ENCODE measurements at regions of chr17 and their contacts with region 1.

Region 1: GRCh38 chr17:31580316-31581021 is 189.0 kb downstream of the RAB11FIP4 start:
- DNase-seq: peak; percentile 74
- H3K4me3 Mint-ChIP-seq: peak overlapping the region; percentile 52
- H3K27ac Mint-ChIP-seq: peak overlapping the region; percentile 70
- H3K4me1 Mint-ChIP-seq: peaks cover 53% of the 10 kb centered on the region
- H3K27me3 Mint-ChIP-seq: no peaks in the 10 kb centered on the region
- CTCF ChIP-seq: no peak

Region 2: DNA sequence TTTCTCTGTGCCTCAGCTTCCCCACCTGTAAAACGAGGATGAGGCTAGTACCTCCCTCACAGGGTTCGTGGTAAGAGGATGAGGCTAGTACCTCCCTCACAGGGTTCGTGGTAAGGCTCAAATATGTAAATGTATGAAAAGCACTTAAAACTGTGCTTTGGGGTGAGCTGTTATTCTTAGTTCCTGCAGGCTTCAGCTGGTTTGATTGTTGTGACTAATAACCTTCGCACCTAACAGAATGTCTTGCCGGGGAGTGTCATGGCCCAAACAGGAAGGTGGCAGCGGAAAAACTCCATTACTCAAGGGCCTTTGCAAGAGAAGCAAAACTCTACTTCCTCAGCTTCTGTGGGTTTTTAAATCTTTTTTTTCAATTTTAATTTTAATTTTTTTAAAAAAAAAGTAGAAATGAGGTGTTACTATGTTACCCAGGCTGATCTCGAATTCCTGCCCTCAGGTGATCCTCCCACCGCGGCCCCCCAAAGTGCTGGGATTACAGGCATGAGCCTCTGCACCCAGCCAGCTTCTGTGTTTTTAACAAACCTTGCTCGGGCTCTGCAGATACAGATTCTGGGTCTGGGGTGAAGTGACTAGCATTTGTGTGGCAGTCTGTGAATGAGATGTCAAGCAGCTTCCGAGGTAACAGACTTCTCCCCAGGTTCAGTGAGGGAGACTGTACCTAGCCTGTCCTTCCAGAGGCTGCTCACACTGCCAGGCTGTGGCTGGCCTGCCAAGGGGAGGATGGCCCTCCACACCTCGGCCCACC is 86.0 kb before region 1 on chr17:
- CTCF ChIA-PET with region 1: no interaction called
- intact Hi-C with region 1: no loop called
- DNase-seq: no peak
- H3K4me3 Mint-ChIP-seq: no peak overlapping the region
- H3K27ac Mint-ChIP-seq: peak overlapping the region; percentile 66
- H3K4me1 Mint-ChIP-seq: peaks cover 52% of the 10 kb centered on the region
- H3K27me3 Mint-ChIP-seq: no peaks in the 10 kb centered on the region
- CTCF ChIP-seq: no peak

Region 3: GRCh38 chr17:31517524-31517923 is 62.9 kb before region 1 on chr17:
- CTCF ChIA-PET with region 1: no interaction called
- intact Hi-C with region 1: no loop called
- DNase-seq: peak; percentile 43
- H3K4me3 Mint-ChIP-seq: no peak overlapping the region
- H3K27ac Mint-ChIP-seq: no peak overlapping the region
- H3K4me1 Mint-ChIP-seq: no peaks in the 10 kb centered on the region
- H3K27me3 Mint-ChIP-seq: no peaks in the 10 kb centered on the region
- CTCF ChIP-seq: peak; percentile 32

Region 4: GRCh38 chr17:31549525-31550388 is 30.7 kb before region 1 on chr17:
- CTCF ChIA-PET with region 1: no interaction called
- intact Hi-C with region 1: loop called (anchors 1 kb)
- DNase-seq: peak; percentile 96
- H3K4me3 Mint-ChIP-seq: peak overlapping the region; percentile 84
- H3K27ac Mint-ChIP-seq: peak overlapping the region; percentile 69
- H3K4me1 Mint-ChIP-seq: peaks cover 9% of the 10 kb centered on the region
- H3K27me3 Mint-ChIP-seq: no peaks in the 10 kb centered on the region
- CTCF ChIP-seq: no peak

Measured in Calu3 (cell line).